ENCODE measurements at regions of chr9 and their contacts with region 1.

Region 1: DNA sequence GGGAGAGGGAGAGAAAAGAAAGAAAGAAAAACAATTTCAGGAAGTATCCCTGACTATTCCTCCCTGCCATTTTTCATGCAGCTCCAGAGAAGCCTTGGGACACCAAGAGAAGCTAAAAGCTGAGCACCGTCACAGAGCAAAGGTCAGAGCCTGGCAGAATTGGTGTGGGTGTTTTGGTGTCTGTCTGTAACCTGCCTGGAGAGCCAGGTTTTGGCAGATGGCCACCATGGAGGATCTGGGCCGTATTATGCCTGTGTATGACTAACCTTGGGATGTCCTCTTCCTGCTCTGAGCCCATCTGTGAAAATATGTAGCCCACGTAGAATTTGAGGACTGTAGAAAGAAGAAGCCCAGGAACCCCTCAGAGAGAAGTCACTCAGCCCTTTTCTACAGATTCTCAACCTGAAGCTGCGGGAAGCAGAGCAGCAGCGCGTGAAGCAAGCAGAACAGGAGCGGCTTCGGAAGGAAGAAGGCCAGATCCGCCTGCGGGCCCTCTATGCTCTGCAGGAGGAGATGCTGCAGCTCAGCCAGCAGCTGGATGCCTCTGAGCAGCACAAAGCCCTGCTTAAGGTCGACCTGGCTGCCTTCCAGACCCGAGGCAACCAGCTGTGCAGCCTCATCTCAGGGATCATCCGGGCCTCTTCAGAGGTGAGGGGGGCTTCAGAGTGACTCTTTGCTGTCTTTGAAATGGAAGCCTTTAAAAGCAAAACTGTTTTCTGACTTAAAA is 18.8 kb downstream of the GLE1 start:
- DNase-seq: peak; percentile 18 to 77 (median 42)
- H3K4me3 ChIP-seq: no peak overlapping the region
- H3K27ac ChIP-seq: peak overlapping the region in 1 of 5 donors; percentile 13
- H3K4me1 ChIP-seq: peaks cover 0 to 10% of the 10 kb centered on the region in 2 donors
- H3K27me3 ChIP-seq: no peaks in the 10 kb centered on the region
- CTCF ChIP-seq: no peak
- POLR2A ChIP-seq: no peak

Region 2: GRCh38 chr9:128587453-128587852 is 64.1 kb after region 1 on chr9:
- intact Hi-C with region 1: loop called in 1 of 2 experiments (anchors 10 kb)
- DNase-seq: no peak
- H3K4me3 ChIP-seq: no peak overlapping the region
- H3K27ac ChIP-seq: no peak overlapping the region
- H3K4me1 ChIP-seq: no peaks in the 10 kb centered on the region
- H3K27me3 ChIP-seq: no peaks in the 10 kb centered on the region
- CTCF ChIP-seq: no peak
- POLR2A ChIP-seq: no peak

Measured in adrenal gland (tissue), 19 donors.